ENCODE measurements at regions of chr19 and their contacts with region 1.

Region 1: DNA sequence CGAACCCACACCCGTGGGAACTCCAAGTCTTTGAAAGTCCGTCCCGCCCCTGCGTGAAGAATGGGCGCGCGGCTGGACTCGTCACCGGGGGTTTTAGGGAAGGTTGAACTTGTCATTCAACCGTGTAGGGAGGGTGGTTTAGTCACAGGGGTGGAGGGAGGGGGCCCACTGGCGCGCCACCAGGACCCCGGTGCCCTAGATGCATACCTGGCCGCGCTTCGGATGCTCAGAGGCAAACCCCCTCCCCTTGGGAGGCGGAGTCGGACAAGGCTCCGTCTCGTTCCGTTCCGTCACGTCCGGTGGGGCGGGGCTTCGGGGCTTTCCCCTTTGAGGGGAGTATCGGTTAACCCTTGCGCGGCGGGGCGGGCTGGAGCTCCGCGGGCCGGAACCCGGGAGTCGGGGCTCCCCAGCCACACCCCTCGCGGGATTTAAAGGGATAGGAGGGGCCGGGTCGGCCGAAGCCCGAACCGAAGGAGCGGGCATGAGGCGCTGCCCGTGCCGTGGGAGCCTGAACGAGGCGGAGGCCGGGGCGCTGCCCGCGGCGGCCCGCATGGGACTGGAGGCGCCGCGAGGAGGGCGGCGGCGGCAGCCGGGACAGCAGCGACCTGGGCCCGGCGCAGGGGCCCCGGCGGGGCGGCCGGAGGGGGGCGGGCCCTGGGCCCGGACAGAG is at the starts of genes COQ8B and ITPKC:
- DNase-seq: peak; percentile 96 to 100 (median 99)
- ATAC-seq: peak; percentile 88
- H3K4me3 ChIP-seq: peak within 1 kb of the TSS; percentile 75
- H3K4me3 Mint-ChIP-seq: peak within 1 kb of the TSS; percentile 87 to 99 (median 94)
- H3K27ac ChIP-seq: peak within 1 kb of the TSS; percentile 92
- H3K27ac Mint-ChIP-seq: peak within 1 kb of the TSS; percentile 94 to 99 (median 97)
- H3K4me1 ChIP-seq: peaks cover 39 to 44% of the 10 kb centered on the region in 2 donors
- H3K4me1 Mint-ChIP-seq: peaks cover 42 to 74% (median 67%) of the 10 kb centered on the region in 7 donors
- H3K27me3 ChIP-seq: no peaks in the 10 kb centered on the region
- H3K27me3 Mint-ChIP-seq: no peaks in the 10 kb centered on the region
- total RNA-seq, gene COQ8B: 26.2 to 48.3 (median 43.8) TPM
- total RNA-seq, gene ITPKC: 4.9 to 9.0 (median 7.3) TPM

Region 2: GRCh38 chr19:39341719-39342604 is 1374.8 kb before region 1 on chr19 and contains the start of gene SAMD4B:
- CTCF ChIA-PET with region 1: no interaction called
- POLR2A ChIA-PET with region 1: no interaction called
- intact Hi-C with region 1: loop called in 1 of 2 experiments (anchors 5 kb)
- DNase-seq: peak; percentile 97 to 100 (median 99)
- ATAC-seq: peak; percentile 93
- H3K4me3 ChIP-seq: peak within 1 kb of the TSS; percentile 95
- H3K4me3 Mint-ChIP-seq: peak within 1 kb of the TSS; percentile 90 to 100 (median 97)
- H3K27ac ChIP-seq: peak within 1 kb of the TSS; percentile 84
- H3K27ac Mint-ChIP-seq: peak within 1 kb of the TSS; percentile 90 to 97 (median 96)
- H3K4me1 ChIP-seq: peaks cover 23 to 42% of the 10 kb centered on the region in 2 donors
- H3K4me1 Mint-ChIP-seq: peaks cover 64 to 77% (median 73%) of the 10 kb centered on the region in 7 donors
- H3K27me3 ChIP-seq: no peaks in the 10 kb centered on the region
- H3K27me3 Mint-ChIP-seq: no peaks in the 10 kb centered on the region
- total RNA-seq, gene SAMD4B: 52.0 to 84.6 (median 65.6) TPM

Region 3: GRCh38 chr19:40425450-40426287 is 291.1 kb before region 1 on chr19 and contains the start of gene SERTAD1:
- CTCF ChIA-PET with region 1: no interaction called
- POLR2A ChIA-PET with region 1: no interaction called
- intact Hi-C with region 1: loop called in 1 of 2 experiments (anchors 10 kb)
- DNase-seq: peak; percentile 99 to 100 (median 100)
- ATAC-seq: peak; percentile 96
- H3K4me3 ChIP-seq: peak within 1 kb of the TSS; percentile 77
- H3K4me3 Mint-ChIP-seq: peak within 1 kb of the TSS; percentile 90 to 99 (median 96)
- H3K27ac ChIP-seq: peak within 1 kb of the TSS; percentile 87
- H3K27ac Mint-ChIP-seq: peak within 1 kb of the TSS; percentile 92 to 100 (median 98)
- H3K4me1 ChIP-seq: peaks cover 15 to 18% of the 10 kb centered on the region in 2 donors
- H3K4me1 Mint-ChIP-seq: peaks cover 12 to 38% (median 24%) of the 10 kb centered on the region in 7 donors
- H3K27me3 ChIP-seq: no peaks in the 10 kb centered on the region
- H3K27me3 Mint-ChIP-seq: peaks cover 0 to 2% (median 0%) of the 10 kb centered on the region in 5 donors
- total RNA-seq, gene SERTAD1: 8.1 to 30.9 (median 13.5) TPM

Region 4: DNA sequence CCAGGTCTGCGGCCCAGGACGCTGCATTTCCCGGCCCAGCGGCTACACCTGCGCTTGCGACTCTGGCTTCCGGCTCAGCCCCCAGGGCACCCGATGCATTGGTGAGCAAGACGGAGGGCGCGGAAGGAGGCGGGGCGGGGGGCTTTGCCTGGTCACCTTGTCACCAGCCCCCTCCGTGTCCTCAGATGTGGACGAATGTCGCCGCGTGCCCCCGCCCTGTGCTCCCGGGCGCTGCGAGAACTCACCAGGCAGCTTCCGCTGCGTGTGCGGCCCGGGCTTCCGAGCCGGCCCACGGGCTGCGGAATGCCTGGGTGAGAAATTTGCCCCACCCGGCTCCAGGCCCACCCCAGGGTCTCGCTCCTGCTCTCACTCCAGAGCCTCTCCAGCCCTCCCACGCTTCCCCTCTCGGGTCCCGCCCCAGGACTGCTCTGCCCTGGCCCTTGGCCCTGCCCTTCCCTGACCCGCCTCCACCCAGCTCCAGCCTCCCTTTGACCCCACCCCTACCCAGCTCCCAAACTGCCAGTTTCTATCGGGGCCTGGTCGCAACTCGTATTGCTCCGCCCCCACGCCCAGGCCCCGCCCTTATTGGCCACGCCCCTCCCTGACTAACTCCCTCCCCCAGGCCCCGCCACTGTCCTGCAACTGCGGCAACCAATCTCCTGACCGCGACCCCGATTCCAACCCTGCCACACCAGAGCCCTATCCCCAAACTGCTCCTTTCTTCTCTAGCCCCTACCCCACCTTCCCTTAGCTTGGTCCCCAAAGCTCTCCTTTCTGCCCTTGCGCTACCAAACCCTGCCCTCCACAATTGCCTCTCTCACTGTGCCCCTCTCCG is 107.0 kb before region 1 on chr19:
- CTCF ChIA-PET with region 1: no interaction called
- POLR2A ChIA-PET with region 1: no interaction called
- intact Hi-C with region 1: loop called (anchors 2 kb)
- DNase-seq: peak; percentile 67 to 96 (median 78)
- ATAC-seq: peak; percentile 64
- H3K4me3 ChIP-seq: peak overlapping the region; percentile 63
- H3K4me3 Mint-ChIP-seq: peak overlapping the region; percentile 75 to 92 (median 86)
- H3K27ac ChIP-seq: peak overlapping the region; percentile 74
- H3K27ac Mint-ChIP-seq: peak overlapping the region; percentile 89 to 100 (median 92)
- H3K4me1 ChIP-seq: peaks cover 35 to 45% of the 10 kb centered on the region in 2 donors
- H3K4me1 Mint-ChIP-seq: peaks cover 20 to 78% (median 63%) of the 10 kb centered on the region in 7 donors
- H3K27me3 ChIP-seq: no peaks in the 10 kb centered on the region
- H3K27me3 Mint-ChIP-seq: peaks cover 0 to 8% (median 0%) of the 10 kb centered on the region in 5 donors

Region 5: GRCh38 chr19:40777937-40778705 is 61.3 kb after region 1 on chr19 and contains the start of gene RAB4B:
- CTCF ChIA-PET with region 1: no interaction called
- POLR2A ChIA-PET with region 1: interaction called, 12 read pairs
- intact Hi-C with region 1: loop called (anchors 1 kb)
- DNase-seq: peak; percentile 99 to 100 (median 100)
- ATAC-seq: peak; percentile 92
- H3K4me3 ChIP-seq: peak within 1 kb of the TSS; percentile 97
- H3K4me3 Mint-ChIP-seq: peak within 1 kb of the TSS; percentile 91 to 99 (median 96)
- H3K27ac ChIP-seq: peak within 1 kb of the TSS; percentile 92
- H3K27ac Mint-ChIP-seq: peak within 1 kb of the TSS; percentile 87 to 99 (median 98)
- H3K4me1 ChIP-seq: peaks cover 18 to 24% of the 10 kb centered on the region in 2 donors
- H3K4me1 Mint-ChIP-seq: peaks cover 31 to 49% (median 39%) of the 10 kb centered on the region in 7 donors
- H3K27me3 ChIP-seq: no peaks in the 10 kb centered on the region
- H3K27me3 Mint-ChIP-seq: no peaks in the 10 kb centered on the region
- total RNA-seq, gene RAB4B: 37.6 to 63.0 (median 52.5) TPM

Region 6: GRCh38 chr19:40948580-40949299 is 231.9 kb after region 1 on chr19:
- CTCF ChIA-PET with region 1: no interaction called
- POLR2A ChIA-PET with region 1: no interaction called
- intact Hi-C with region 1: no loop called
- DNase-seq: no peak
- ATAC-seq: no peak
- H3K4me3 ChIP-seq: no peak overlapping the region
- H3K4me3 Mint-ChIP-seq: no peak overlapping the region
- H3K27ac ChIP-seq: no peak overlapping the region
- H3K27ac Mint-ChIP-seq: no peak overlapping the region
- H3K4me1 ChIP-seq: no peaks in the 10 kb centered on the region
- H3K4me1 Mint-ChIP-seq: peaks cover 0 to 6% (median 0%) of the 10 kb centered on the region in 7 donors
- H3K27me3 ChIP-seq: no peaks in the 10 kb centered on the region
- H3K27me3 Mint-ChIP-seq: peaks cover 0 to 31% (median 16%) of the 10 kb centered on the region in 5 donors

Region 7: DNA sequence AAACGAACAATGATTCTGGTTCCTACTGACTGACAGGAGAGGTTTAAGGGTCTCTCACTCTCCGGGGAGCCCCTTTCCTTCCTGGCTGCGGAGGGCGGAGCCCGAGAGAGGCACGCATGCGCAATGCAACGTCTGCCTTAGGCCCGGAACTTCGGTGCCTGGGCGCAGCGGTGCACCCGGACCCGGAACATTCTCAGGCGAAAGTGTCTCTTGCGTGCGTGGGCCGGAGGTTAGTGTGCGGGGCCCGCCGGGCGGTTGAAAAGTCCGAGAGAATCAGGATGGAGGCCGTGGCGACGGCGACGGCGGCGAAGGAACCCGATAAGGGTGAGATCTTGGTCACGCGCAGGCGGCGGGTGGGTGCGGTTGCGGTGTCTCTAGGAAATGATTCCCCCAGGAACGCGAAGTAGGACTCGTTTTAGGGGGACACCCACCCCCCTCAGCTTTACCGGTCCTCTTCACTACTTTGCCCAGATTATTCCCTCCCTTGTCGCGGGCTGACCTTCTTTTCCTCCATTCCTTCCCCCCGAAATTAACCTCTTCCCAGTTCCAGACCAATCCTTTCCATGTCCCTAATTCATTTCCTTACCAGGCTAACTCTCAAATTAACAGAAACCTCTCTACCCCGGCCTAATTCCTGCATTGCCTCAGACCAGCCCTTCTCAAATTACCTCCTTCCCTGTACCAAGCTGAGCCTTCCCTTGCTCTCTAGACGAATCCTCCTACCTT is 593.4 kb after region 1 on chr19 and contains the start of gene CCDC97:
- CTCF ChIA-PET with region 1: no interaction called
- POLR2A ChIA-PET with region 1: no interaction called
- intact Hi-C with region 1: loop called in 1 of 2 experiments (anchors 5 kb)
- DNase-seq: peak; percentile 85 to 94 (median 91)
- ATAC-seq: peak; percentile 72
- H3K4me3 ChIP-seq: peak within 1 kb of the TSS; percentile 72
- H3K4me3 Mint-ChIP-seq: peak within 1 kb of the TSS; percentile 93 to 100 (median 96)
- H3K27ac ChIP-seq: peak within 1 kb of the TSS; percentile 87
- H3K27ac Mint-ChIP-seq: peak within 1 kb of the TSS; percentile 94 to 99 (median 98)
- H3K4me1 ChIP-seq: peaks cover 51 to 60% of the 10 kb centered on the region in 2 donors
- H3K4me1 Mint-ChIP-seq: peaks cover 52 to 90% (median 69%) of the 10 kb centered on the region in 7 donors
- H3K27me3 ChIP-seq: no peaks in the 10 kb centered on the region
- H3K27me3 Mint-ChIP-seq: peaks cover 0 to 3% (median 0%) of the 10 kb centered on the region in 5 donors
- total RNA-seq, gene CCDC97: 35.9 to 56.5 (median 49.1) TPM

Measured in naive thymus-derived CD4-positive, alpha-beta T cell (primary cell).